ENCODE measurements at regions of chr2 and their contacts with region 1.

Region 1: DNA sequence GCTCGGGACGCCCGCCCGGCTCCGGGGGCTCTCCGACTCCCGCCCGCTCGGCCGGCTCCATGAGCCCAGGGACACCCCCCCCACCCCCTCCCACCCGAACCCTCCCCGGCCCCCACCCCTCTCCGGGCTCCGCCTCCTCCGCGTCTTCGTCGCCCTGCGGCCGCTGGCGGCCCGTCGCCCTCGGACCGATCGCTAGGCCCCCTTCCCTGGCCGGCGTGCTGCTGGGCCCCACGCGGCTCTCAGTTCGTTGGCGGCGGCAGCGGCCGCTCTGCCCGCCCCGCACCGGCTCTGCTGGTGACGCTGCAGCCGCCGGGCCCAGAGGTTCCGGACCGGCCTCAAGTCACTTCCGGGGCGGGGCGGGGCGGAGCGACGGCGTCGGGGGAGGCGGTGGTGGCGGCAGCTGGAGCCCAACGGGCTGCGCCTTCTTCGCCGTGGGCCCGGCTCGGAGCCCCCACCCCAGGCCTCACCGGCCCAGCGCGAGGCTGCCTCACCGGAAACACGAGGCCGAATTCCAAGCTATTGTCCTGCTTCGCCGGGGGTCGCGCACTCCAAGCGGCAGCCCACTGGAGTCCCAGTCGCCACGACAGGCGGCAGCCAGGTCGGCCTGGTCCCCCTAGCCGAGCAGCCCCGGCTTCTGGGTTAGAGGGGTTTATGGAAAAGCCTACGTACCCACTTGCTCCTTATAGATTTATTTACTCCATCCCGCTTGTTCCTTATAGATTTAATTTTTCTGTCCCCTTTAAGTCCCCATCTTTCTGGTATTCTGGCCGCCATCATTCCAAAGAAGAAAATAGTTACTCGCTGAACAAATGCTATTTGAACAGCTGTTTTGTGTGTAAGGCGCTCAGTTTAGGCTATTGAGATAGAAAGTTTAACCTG is at the start of gene PSME4:
- DNase-seq: peak; percentile 88
- H3K4me3 Mint-ChIP-seq: peak within 1 kb of the TSS; percentile 87
- H3K27ac Mint-ChIP-seq: peak within 1 kb of the TSS; percentile 94
- H3K4me1 Mint-ChIP-seq: peaks cover 33% of the 10 kb centered on the region
- H3K27me3 Mint-ChIP-seq: no peaks in the 10 kb centered on the region
- CTCF ChIP-seq: no peak
- total RNA-seq, gene PSME4: 54.8 and 65.2 TPM in 2 replicates

Region 2: GRCh38 chr2:53767405-53768241 is 203.3 kb before region 1 on chr2 and contains the start of gene CHAC2:
- CTCF ChIA-PET with region 1: no interaction called
- POLR2A ChIA-PET with region 1: interaction called, 11 read pairs
- intact Hi-C with region 1: no loop called
- DNase-seq: peak; percentile 84
- H3K4me3 Mint-ChIP-seq: peak within 1 kb of the TSS; percentile 88
- H3K27ac Mint-ChIP-seq: peak within 1 kb of the TSS; percentile 77
- H3K4me1 Mint-ChIP-seq: peaks cover 25% of the 10 kb centered on the region
- H3K27me3 Mint-ChIP-seq: no peaks in the 10 kb centered on the region
- CTCF ChIP-seq: no peak
- total RNA-seq, gene CHAC2: 7.4 and 10.5 TPM in 2 replicates

Region 3: DNA sequence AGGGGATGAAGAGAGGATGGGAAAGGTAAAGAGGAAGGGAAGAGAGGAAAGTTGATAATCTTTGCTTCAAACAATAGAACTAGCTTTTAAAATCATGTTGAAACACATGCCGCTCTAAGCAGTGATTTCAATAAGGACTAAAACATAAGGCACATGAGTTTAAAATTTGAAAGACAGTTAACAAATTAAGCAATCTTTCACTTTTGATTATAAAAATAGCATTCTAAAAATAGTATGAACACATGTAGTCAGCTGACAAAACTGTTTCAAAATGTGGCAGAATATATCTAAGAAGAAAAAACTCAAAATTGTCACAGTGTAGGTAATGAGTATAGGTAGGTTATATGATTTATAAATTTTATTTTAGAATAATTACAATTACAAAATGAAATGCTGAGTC is 25.4 kb before region 1 on chr2:
- CTCF ChIA-PET with region 1: no interaction called
- POLR2A ChIA-PET with region 1: interaction called, 27 read pairs
- intact Hi-C with region 1: no loop called
- DNase-seq: no peak
- H3K4me3 Mint-ChIP-seq: no peak overlapping the region
- H3K27ac Mint-ChIP-seq: peak overlapping the region; percentile 41
- H3K4me1 Mint-ChIP-seq: peaks cover 11% of the 10 kb centered on the region
- H3K27me3 Mint-ChIP-seq: no peaks in the 10 kb centered on the region
- CTCF ChIP-seq: no peak

Region 4: DNA sequence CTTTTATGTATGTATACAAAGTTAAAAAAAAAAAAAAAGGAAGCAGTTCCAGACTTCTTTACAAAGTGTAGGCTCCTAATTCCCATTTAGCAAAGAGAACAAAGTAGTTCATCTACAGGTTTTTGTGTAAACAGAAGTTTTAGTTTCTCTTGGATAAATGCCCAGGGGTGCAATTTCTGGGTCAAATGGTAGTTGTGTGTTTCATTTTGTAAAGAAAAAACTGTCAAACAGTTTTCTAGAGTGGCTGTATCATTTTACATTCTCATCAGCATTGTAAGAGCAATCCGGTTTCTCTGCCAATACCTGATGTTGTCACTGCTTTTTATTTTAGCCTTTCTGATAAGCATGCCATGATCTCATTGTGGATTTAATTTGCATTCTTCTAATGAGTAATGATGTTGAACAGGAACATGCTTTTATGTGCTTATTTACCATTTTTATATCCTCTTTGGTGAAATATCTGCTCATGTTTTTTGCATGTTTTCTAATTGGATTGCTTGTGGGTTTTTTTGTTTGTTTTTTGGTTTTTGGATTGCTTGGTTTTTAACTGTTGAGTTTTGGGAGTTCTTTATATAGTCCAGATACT is 16.5 kb after region 1 on chr2:
- CTCF ChIA-PET with region 1: no interaction called
- POLR2A ChIA-PET with region 1: interaction called, 15 read pairs
- intact Hi-C with region 1: no loop called
- DNase-seq: peak; percentile 49
- H3K4me3 Mint-ChIP-seq: no peak overlapping the region
- H3K27ac Mint-ChIP-seq: peak overlapping the region; percentile 28
- H3K4me1 Mint-ChIP-seq: peaks cover 12% of the 10 kb centered on the region
- H3K27me3 Mint-ChIP-seq: no peaks in the 10 kb centered on the region
- CTCF ChIP-seq: no peak

Region 5: DNA sequence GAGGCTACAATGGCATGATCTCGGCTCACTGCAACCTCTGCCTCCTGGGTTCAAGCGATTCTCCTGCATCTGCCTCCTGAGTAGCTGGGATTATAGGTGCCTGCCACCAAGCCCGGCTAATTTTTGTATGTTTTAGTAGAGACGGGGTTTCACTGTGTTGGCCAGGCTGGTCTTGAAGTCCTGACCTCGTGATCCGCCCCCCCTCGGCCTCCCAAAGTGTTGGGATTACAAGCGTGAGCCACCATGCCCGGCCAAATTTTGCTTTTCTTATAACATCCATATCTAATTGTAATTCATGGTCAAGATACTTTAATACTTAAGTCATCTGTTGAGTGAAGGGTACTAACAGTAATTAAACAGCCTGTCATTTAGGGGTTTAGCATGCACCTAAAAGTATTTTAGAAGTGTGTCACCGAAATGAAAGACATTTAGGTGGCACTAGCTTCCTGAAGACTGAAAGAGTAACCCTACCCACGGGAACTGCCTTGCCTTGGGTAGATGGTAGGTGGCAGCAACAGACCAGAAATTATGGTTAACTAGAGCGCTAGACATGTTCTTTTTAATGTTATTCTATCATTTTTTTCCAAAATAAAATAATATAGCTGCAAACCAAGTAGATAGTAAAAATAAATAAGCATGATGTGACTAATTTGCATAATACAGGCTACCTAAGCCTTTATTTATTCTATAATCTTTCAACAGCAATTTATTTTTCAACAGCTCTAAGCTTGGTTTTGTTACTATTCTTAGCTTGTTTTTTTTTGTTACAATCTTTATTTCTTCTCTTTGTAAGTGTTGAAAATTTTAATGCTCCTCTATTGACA is 135.9 kb after region 1 on chr2:
- CTCF ChIA-PET with region 1: interaction called, 7 read pairs
- POLR2A ChIA-PET with region 1: interaction called, 52 read pairs
- intact Hi-C with region 1: loop called (anchors 2 kb)
- DNase-seq: peak; percentile 68
- H3K4me3 Mint-ChIP-seq: no peak overlapping the region
- H3K27ac Mint-ChIP-seq: no peak overlapping the region
- H3K4me1 Mint-ChIP-seq: peaks cover 6% of the 10 kb centered on the region
- H3K27me3 Mint-ChIP-seq: no peaks in the 10 kb centered on the region
- CTCF ChIP-seq: peak; percentile 64

Region 6: DNA sequence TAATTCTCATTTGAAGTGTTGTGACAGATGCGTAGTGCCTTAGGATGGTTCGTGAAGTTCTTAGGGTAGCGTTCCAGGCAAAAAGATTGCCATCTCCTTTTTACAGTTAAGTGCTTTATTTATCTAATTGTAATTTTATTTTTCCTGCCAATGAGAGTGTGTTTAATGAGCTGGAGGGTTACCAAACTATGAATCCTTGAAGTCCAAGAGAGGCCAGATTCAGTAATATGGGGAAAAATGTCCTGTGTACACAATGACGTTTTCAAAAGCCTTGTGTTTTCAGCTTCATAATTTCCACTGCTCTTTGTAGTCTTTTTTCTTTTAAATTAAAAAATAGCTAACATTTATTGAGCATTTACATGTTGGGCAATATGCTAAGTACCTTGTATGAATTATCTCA is 168.2 kb after region 1 on chr2:
- CTCF ChIA-PET with region 1: no interaction called
- POLR2A ChIA-PET with region 1: no interaction called
- intact Hi-C with region 1: no loop called
- DNase-seq: no peak
- H3K4me3 Mint-ChIP-seq: no peak overlapping the region
- H3K27ac Mint-ChIP-seq: no peak overlapping the region
- H3K4me1 Mint-ChIP-seq: no peaks in the 10 kb centered on the region
- H3K27me3 Mint-ChIP-seq: no peaks in the 10 kb centered on the region
- CTCF ChIP-seq: no peak

Region 7: DNA sequence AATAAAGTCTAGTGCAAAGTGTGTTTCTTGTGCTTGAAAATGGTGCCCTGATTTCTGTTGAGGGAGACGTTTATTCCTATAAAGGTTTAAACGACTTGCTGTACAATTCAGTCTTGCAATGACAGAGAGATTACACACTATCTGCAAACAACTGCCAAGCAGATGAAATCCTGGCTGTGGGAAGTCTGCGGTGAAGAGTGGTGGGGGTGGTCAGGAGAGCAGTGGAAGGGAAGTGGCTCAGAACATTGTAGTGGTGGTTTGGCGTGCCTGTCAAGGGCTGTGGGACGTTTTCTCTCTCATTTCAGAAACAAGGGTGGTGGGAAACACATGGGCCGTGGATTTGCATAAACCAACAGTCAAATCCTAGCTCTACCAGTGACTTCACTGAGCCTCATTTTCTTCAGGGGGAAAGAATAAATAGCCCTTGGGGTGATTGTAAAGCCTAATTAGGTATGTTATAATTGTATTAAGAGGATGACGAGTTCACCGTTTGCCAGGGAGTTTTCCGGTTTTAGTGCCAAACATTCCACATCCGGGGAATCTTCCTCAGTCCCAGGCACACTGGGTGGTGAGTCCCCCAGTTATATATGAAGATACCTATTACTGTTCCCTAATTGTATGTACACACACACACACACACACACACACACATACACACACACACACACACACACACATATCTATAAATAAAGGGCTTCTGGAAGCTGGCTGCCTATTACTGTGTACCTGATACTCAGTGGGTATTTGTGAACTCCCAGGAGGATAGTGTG is 600.1 kb after region 1 on chr2:
- CTCF ChIA-PET with region 1: no interaction called
- POLR2A ChIA-PET with region 1: interaction called, 10 read pairs
- intact Hi-C with region 1: no loop called
- DNase-seq: peak; percentile 87
- H3K4me3 Mint-ChIP-seq: peak overlapping the region; percentile 63
- H3K27ac Mint-ChIP-seq: peak overlapping the region; percentile 94
- H3K4me1 Mint-ChIP-seq: peaks cover 68% of the 10 kb centered on the region
- H3K27me3 Mint-ChIP-seq: no peaks in the 10 kb centered on the region
- CTCF ChIP-seq: no peak